ENCODE measurements at regions of chr1 and their contacts with region 1.

Region 1: GRCh38 chr1:3012456-3013291 is 8.6 kb upstream of the ACTRT2 start:
- DNase-seq: peak in 3 of 4 donors; percentile 38 to 90 (median 54)
- ATAC-seq: peak; percentile 96
- H3K4me3 ChIP-seq: no peak overlapping the region
- H3K27ac ChIP-seq: no peak overlapping the region
- H3K4me1 ChIP-seq: peaks cover 0 to 7% of the 10 kb centered on the region in 2 donors
- H3K27me3 ChIP-seq: peaks cover 9 to 76% of the 10 kb centered on the region in 2 donors
- CTCF ChIP-seq: peak; percentile 77 to 84

Region 2: GRCh38 chr1:2927393-2928360 is 85.0 kb before region 1 on chr1:
- intact Hi-C with region 1: no loop called
- DNase-seq: peak in 2 of 4 donors; percentile 53 to 76
- ATAC-seq: no peak
- H3K4me3 ChIP-seq: no peak overlapping the region
- H3K27ac ChIP-seq: no peak overlapping the region
- H3K4me1 ChIP-seq: no peaks in the 10 kb centered on the region
- H3K27me3 ChIP-seq: peaks cover 0 to 82% of the 10 kb centered on the region in 2 donors
- CTCF ChIP-seq: no peak

Region 3: GRCh38 chr1:3283849-3284248 is 271.2 kb after region 1 on chr1:
- intact Hi-C with region 1: loop called in 1 of 2 experiments (anchors 10 kb)
- DNase-seq: peak in 2 of 4 donors; percentile 23 to 52
- ATAC-seq: peak; percentile 88
- H3K4me3 ChIP-seq: no peak overlapping the region
- H3K27ac ChIP-seq: no peak overlapping the region
- H3K4me1 ChIP-seq: no peaks in the 10 kb centered on the region
- H3K27me3 ChIP-seq: peaks cover 0 to 43% of the 10 kb centered on the region in 2 donors
- CTCF ChIP-seq: peak; percentile 53 to 57

Region 4: GRCh38 chr1:3384407-3384806 is 371.7 kb after region 1 on chr1:
- intact Hi-C with region 1: no loop called
- DNase-seq: no peak
- ATAC-seq: no peak
- H3K4me3 ChIP-seq: no peak overlapping the region
- H3K27ac ChIP-seq: no peak overlapping the region
- H3K4me1 ChIP-seq: no peaks in the 10 kb centered on the region
- H3K27me3 ChIP-seq: peaks cover 0 to 49% of the 10 kb centered on the region in 2 donors
- CTCF ChIP-seq: no peak

Region 5: GRCh38 chr1:3423245-3423829 is 410.7 kb after region 1 on chr1:
- intact Hi-C with region 1: loop called in 1 of 2 experiments (anchors 5 kb)
- DNase-seq: peak in 2 of 4 donors; percentile 40 to 75
- ATAC-seq: peak; percentile 91
- H3K4me3 ChIP-seq: no peak overlapping the region
- H3K27ac ChIP-seq: no peak overlapping the region
- H3K4me1 ChIP-seq: no peaks in the 10 kb centered on the region
- H3K27me3 ChIP-seq: peaks cover 0 to 48% of the 10 kb centered on the region in 2 donors
- CTCF ChIP-seq: no peak